ENCODE measurements at regions of chrX and their contacts with region 1.

Region 1: DNA sequence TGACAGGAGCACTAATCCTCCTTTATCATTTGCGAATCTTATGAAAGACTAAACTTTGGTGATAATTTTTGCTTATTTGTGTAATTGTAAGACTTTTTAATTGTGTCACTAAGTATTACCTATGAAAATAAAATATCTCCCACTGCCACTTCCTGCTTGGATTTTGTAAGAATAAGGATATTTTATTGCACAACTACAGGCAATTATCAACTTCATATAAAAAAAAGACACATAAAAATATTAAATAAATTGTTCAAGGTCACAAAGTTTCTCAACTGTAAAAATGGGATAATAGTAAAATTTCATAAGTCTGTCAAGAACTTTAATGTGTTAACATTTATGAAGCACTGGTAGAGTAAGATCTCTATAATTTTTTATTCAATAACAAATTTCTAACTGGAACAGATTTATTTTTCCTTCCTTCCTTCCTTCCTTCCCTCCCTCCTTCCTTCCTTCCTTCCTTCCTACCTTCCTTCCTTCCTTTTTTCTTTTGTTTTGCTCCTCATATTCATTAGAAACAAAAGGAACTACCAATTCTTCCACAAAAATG is 527.6 kb upstream of the FAM47C start:
- DNase-seq: peak; percentile 90
- H3K4me3 ChIP-seq: no peak overlapping the region
- H3K27ac ChIP-seq: peak overlapping the region; percentile 98
- H3K4me1 ChIP-seq: peaks cover 34% of the 10 kb centered on the region
- H3K27me3 ChIP-seq: no peaks in the 10 kb centered on the region
- CTCF ChIP-seq: no peak

Region 2: DNA sequence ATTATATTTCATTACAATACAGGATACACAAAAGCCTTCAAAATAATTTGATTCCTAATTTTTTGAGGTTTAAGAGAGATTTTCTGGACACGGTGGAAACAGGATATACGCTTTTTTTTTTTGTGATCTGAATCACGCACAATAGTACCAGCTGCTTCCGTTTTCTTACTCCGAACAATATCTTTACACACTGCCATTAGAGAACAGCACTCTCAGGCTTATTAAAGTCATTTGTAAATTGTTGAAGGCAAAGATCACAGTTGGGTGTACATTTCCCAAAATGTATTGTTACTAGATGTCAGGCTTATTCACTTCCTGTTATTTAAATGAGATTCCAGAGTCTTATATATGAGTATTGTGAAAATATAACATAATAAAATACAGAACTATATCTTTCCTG is 1895.0 kb before region 1 on chrX:
- CTCF ChIA-PET with region 1: no interaction called
- POLR2A ChIA-PET with region 1: no interaction called
- intact Hi-C with region 1: loop called (anchors 2 kb)
- DNase-seq: peak; percentile 94
- H3K4me3 ChIP-seq: peak overlapping the region; percentile 23
- H3K27ac ChIP-seq: peak overlapping the region; percentile 85
- H3K4me1 ChIP-seq: peaks cover 21% of the 10 kb centered on the region
- H3K27me3 ChIP-seq: no peaks in the 10 kb centered on the region
- CTCF ChIP-seq: no peak

Region 3: GRCh38 chrX:35890699-35891098 is 589.8 kb before region 1 on chrX:
- CTCF ChIA-PET with region 1: interaction called, 3 read pairs
- POLR2A ChIA-PET with region 1: no interaction called
- intact Hi-C with region 1: loop called (anchors 1 kb)
- DNase-seq: peak; percentile 94
- H3K4me3 ChIP-seq: peak overlapping the region; percentile 21
- H3K27ac ChIP-seq: peak overlapping the region; percentile 62
- H3K4me1 ChIP-seq: peaks cover 10% of the 10 kb centered on the region
- H3K27me3 ChIP-seq: no peaks in the 10 kb centered on the region
- CTCF ChIP-seq: peak; percentile 79

Region 4: GRCh38 chrX:36462142-36462541 is 18.4 kb before region 1 on chrX:
- CTCF ChIA-PET with region 1: interaction called, 4 read pairs
- POLR2A ChIA-PET with region 1: no interaction called
- intact Hi-C with region 1: loop called (anchors 2 kb)
- DNase-seq: peak; percentile 73
- H3K4me3 ChIP-seq: no peak overlapping the region
- H3K27ac ChIP-seq: peak overlapping the region; percentile 87
- H3K4me1 ChIP-seq: no peaks in the 10 kb centered on the region
- H3K27me3 ChIP-seq: no peaks in the 10 kb centered on the region
- CTCF ChIP-seq: no peak

Region 5: DNA sequence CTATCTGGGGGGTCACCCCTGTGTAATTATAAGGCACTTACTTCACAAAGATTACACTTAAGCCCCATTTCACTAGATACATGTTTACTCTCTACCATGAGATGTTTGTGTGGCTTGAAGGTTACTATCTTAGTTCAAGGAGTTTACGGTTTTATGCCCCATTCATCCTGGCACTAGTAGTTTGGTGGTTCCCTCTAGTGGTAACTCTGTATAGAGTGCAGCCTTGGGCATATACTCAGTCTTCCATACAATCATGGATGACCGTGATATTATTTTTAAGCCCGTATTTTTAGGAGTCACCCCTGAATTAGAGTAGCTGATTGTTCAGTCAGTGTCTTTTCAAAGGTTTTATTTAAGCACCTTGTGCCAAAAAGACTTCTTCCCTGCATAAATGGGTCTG is 417.8 kb after region 1 on chrX:
- CTCF ChIA-PET with region 1: no interaction called
- POLR2A ChIA-PET with region 1: no interaction called
- intact Hi-C with region 1: loop called (anchors 1 kb)
- DNase-seq: peak; percentile 65
- H3K4me3 ChIP-seq: no peak overlapping the region
- H3K27ac ChIP-seq: no peak overlapping the region
- H3K4me1 ChIP-seq: no peaks in the 10 kb centered on the region
- H3K27me3 ChIP-seq: no peaks in the 10 kb centered on the region
- CTCF ChIP-seq: peak; percentile 87

Region 6: DNA sequence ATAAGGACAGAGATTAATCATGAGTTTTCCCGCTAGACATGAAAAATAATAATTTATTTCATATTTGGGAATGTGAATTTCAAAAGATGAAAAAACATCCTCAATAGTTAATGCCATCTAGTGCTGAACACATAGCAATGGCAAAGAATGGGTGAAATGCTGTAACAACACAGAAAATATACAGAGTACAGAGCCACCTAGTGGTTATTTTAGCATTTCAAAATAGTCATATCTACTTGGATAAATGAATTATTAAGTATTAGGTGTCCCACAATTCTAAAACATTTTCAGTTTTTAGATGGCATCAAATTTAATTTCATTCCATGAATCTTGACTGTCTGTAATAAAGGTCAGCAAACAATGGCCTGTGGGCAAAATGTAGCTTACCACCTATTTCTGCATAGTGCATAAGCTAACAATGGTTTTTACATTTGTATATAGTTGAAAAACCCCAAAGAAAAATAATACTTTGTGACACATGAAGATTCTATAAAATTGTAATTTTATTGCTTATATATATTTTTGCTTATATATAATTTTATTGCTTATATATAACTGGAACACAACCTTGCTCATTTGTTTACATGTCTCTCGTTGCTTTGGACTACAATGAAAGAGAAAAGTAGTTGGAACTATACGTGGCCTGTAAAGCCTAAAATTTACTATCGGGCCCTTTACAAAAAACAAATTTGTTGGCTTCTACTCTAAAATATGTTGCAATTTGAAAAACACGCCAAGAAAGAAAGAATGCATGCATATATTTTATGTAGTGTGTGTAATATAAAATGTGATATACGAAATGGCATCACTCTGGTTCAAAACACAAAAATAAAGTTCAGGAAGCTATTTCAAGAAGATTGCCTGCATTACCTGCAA is 428.5 kb after region 1 on chrX:
- CTCF ChIA-PET with region 1: no interaction called
- POLR2A ChIA-PET with region 1: no interaction called
- intact Hi-C with region 1: no loop called
- DNase-seq: peak; percentile 73
- H3K4me3 ChIP-seq: no peak overlapping the region
- H3K27ac ChIP-seq: no peak overlapping the region
- H3K4me1 ChIP-seq: no peaks in the 10 kb centered on the region
- H3K27me3 ChIP-seq: no peaks in the 10 kb centered on the region
- CTCF ChIP-seq: peak; percentile 84

Region 7: DNA sequence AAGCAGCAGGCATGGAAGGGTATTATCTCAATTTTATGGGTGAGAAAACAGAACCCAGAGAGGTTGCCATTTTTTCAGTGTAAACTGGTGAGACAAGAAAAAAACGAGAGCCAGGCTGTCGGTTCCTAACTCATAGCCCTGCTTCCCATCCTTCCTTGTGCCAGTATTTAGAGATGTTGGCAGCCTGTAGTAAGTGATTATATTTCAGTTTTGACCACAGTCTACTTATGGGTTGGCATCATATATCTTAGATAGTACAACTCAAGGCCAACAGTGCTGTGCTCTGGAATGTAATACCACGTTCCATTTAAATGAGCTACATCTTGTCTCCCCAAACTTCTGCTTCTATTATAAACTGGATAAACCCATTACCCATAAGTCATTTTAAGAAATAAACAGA is 1245.8 kb after region 1 on chrX:
- CTCF ChIA-PET with region 1: no interaction called
- POLR2A ChIA-PET with region 1: no interaction called
- intact Hi-C with region 1: no loop called
- DNase-seq: no peak
- H3K4me3 ChIP-seq: no peak overlapping the region
- H3K27ac ChIP-seq: no peak overlapping the region
- H3K4me1 ChIP-seq: no peaks in the 10 kb centered on the region
- H3K27me3 ChIP-seq: no peaks in the 10 kb centered on the region
- CTCF ChIP-seq: no peak